Calu3 (cell line): ENCODE measurements at regions of chr19 and their contacts with region 1.

Region 1: GRCh38 chr19:54002495-54003315 is 11.3 kb downstream of the CACNG6 start:
- DNase-seq: peak; percentile 73
- H3K4me3 Mint-ChIP-seq: peak overlapping the region; percentile 20
- H3K27ac Mint-ChIP-seq: peak overlapping the region; percentile 88
- H3K4me1 Mint-ChIP-seq: peaks cover 51% of the 10 kb centered on the region
- H3K27me3 Mint-ChIP-seq: no peaks in the 10 kb centered on the region
- CTCF ChIP-seq: no peak

Region 2: DNA sequence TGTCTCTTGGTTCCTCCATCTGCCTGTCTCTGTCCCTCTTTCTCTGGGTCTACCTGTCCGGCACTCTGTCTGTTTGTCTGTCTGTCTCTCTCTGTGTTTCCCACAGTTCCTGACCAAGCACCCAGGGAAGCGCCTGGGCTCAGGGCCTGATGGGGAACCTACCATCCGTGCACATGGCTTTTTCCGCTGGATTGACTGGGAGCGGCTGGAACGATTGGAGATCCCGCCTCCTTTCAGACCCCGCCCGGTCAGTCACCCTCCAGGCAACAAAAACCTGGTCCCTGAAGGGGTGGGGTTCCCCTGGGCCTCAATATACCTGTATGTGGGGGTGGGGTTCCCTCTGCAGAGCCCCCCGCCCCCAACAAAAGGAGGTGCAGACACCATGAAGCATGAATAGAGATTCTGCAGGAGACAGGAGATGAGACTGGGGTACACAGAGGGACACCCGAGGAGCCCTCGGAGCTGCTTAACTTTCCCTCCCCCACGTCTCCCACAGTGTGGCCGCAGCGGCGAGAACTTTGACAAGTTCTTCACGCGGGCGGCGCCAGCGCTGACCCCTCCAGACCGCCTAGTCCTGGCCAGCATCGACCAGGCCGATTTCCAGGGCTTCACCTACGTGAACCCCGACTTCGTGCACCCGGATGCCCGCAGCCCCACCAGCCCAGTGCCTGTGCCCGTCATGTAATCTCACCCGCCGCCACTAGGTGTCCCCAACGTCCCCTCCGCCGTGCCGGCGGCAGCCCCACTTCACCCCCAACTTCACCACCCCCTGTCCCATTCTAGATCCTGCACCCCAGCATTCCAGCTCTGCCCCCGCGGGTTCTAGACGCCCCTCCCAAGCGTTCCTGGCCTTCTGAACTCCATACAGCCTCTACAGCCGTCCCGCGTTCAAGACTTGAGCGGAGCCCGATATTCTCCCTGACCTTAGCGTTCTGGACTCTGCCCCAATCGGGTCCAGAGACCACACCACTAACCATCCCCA is 96.2 kb before region 1 on chr19:
- CTCF ChIA-PET with region 1: no interaction called
- intact Hi-C with region 1: no loop called
- DNase-seq: peak; percentile 86
- H3K4me3 Mint-ChIP-seq: peak overlapping the region; percentile 14
- H3K27ac Mint-ChIP-seq: peak overlapping the region; percentile 29
- H3K4me1 Mint-ChIP-seq: peaks cover 57% of the 10 kb centered on the region
- H3K27me3 Mint-ChIP-seq: peaks cover 45% of the 10 kb centered on the region
- CTCF ChIP-seq: peak; percentile 97

Region 3: GRCh38 chr19:54017261-54017660 is 14.6 kb after region 1 on chr19:
- CTCF ChIA-PET with region 1: interaction called, 14 read pairs
- intact Hi-C with region 1: loop called (anchors 1 kb)
- DNase-seq: no peak
- H3K4me3 Mint-ChIP-seq: no peak overlapping the region
- H3K27ac Mint-ChIP-seq: peak overlapping the region; percentile 96
- H3K4me1 Mint-ChIP-seq: peaks cover 56% of the 10 kb centered on the region
- H3K27me3 Mint-ChIP-seq: no peaks in the 10 kb centered on the region
- CTCF ChIP-seq: no peak